ENCODE measurements at regions of chr18 and their contacts with region 1.

Region 1: DNA sequence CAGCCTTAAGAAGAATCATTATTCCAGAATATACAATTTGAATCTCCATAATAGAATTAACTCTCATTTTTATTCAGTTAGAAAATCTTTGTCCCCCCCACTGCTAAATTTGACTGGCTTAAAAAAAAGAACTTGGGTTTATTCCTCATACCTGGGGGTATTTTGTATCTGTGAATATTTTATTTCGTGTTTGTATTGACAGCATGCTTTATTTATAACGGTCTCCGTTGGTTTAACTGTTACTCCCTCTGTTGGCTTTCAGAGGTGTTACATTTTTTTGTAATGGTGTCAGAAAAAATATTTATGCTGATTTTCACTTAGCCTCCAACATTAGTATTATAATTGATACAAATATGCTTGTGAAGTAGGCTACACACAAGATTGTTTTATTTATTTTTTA is 109.1 kb downstream of the HAUS1 start:
- DNase-seq: peak in 7 of 9 donors; percentile 20 to 47 (median 31)
- ATAC-seq: peak; percentile 69
- H3K4me3 ChIP-seq: no peak overlapping the region
- H3K4me3 Mint-ChIP-seq: peak overlapping the region in 9 of 10 donors; percentile 4 to 72 (median 43)
- H3K27ac ChIP-seq: no peak overlapping the region
- H3K27ac Mint-ChIP-seq: peak overlapping the region in 4 of 9 donors; percentile 27 to 62 (median 56)
- H3K4me1 ChIP-seq: peaks cover 21% of the 10 kb centered on the region in 2 donors
- H3K4me1 Mint-ChIP-seq: peaks cover 40 to 96% (median 84%) of the 10 kb centered on the region in 7 donors
- H3K27me3 ChIP-seq: no peaks in the 10 kb centered on the region
- H3K27me3 Mint-ChIP-seq: no peaks in the 10 kb centered on the region

Region 2: DNA sequence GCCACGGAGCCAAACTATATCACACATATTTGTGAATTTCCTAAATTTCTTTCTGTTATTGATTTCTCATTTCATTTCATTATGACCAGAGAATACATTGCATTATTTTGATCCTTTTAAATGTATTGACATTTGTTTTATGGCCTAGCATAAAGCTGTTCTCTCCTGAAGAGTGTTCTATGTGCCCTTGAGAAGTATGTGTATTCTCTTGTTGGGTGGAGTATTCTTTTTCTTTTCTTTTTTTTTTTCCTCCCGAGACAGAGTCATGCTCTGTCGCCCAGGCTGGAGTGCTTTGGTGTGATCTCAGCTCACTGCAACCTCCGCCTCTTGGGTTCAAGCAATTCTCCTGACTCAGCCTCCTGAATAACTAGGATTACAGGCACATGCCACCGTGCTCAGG is 103.9 kb before region 1 on chr18:
- CTCF ChIA-PET with region 1: interaction called, 3 read pairs
- POLR2A ChIA-PET with region 1: no interaction called
- intact Hi-C with region 1: loop called in 1 of 2 experiments (anchors 5 kb)
- DNase-seq: no peak
- ATAC-seq: no peak
- H3K4me3 ChIP-seq: no peak overlapping the region
- H3K4me3 Mint-ChIP-seq: no peak overlapping the region
- H3K27ac ChIP-seq: no peak overlapping the region
- H3K27ac Mint-ChIP-seq: peak overlapping the region in 2 of 9 donors; percentile 43 to 45
- H3K4me1 ChIP-seq: peaks cover 5% of the 10 kb centered on the region in 2 donors
- H3K4me1 Mint-ChIP-seq: peaks cover 15 to 37% (median 24%) of the 10 kb centered on the region in 7 donors
- H3K27me3 ChIP-seq: no peaks in the 10 kb centered on the region
- H3K27me3 Mint-ChIP-seq: no peaks in the 10 kb centered on the region

Region 3: DNA sequence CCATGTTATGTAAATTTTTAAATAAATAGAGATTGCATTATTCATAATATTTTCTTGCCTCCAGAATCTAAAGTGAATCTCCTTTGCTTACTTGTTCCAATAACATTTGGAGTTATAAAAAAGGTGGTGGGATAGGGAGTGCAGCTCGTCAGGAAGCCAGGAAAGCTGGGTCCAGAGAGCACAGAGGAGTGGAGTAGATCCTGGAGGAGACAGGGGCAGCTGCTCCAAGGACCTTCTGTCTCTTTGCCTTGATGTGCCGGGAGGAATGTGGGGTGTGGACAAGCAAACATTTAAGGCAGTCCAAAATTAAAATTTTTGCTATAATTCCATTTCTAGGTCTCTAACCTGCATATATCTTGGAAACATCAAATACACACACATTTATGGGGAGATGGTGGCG is 79.8 kb before region 1 on chr18:
- CTCF ChIA-PET with region 1: no interaction called
- POLR2A ChIA-PET with region 1: no interaction called
- intact Hi-C with region 1: no loop called
- DNase-seq: no peak
- ATAC-seq: no peak
- H3K4me3 ChIP-seq: no peak overlapping the region
- H3K4me3 Mint-ChIP-seq: no peak overlapping the region
- H3K27ac ChIP-seq: no peak overlapping the region
- H3K27ac Mint-ChIP-seq: peak overlapping the region in 2 of 9 donors; percentile 34 to 69
- H3K4me1 ChIP-seq: no peaks in the 10 kb centered on the region
- H3K4me1 Mint-ChIP-seq: peaks cover 0 to 4% (median 0%) of the 10 kb centered on the region in 7 donors
- H3K27me3 ChIP-seq: no peaks in the 10 kb centered on the region
- H3K27me3 Mint-ChIP-seq: no peaks in the 10 kb centered on the region